GM12878 (cell line): ENCODE measurements at regions of chr11 and their contacts with region 1.

Region 1: DNA sequence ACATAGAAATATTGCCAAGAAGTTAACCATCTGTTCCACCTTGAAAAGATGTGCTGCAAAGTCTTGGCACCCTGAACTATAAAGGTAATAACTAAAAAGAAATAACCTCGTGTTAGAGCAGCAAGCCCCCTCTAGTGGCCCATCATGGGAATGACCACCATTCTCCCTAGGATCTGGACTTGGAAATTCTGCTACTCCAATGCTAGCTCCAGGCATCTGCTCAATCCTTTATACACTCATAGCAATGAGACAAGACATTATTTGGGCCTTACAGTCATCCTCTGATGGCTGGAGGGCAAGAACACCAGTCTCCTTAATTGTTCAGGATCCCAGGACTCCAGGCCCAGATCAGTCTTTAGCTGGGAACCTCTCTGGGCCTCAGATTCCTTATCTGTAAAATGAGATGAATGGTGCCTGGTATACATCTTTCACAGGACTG is 76.0 kb downstream of the CWC15 start:
- DNase-seq: no peak
- ATAC-seq: peak; percentile 71
- H3K4me3 ChIP-seq: no peak overlapping the region
- H3K27ac ChIP-seq: no peak overlapping the region
- H3K4me1 ChIP-seq: no peaks in the 10 kb centered on the region
- H3K27me3 ChIP-seq: peaks cover 0 to 3% of the 10 kb centered on the region in 2 experiments; a peak in 1 of 4 replicates
- CTCF ChIP-seq: peak; percentile 81 to 89 (median 88)
- EP300 ChIP-seq: no peak
- POLR2A ChIP-seq: no peak
- RAD21 ChIP-seq: peak; percentile 76

Region 2: GRCh38 chr11:94786264-94787126 is 110.9 kb before region 1 on chr11:
- CTCF ChIA-PET with region 1: interaction called, 25 read pairs
- POLR2A ChIA-PET with region 1: interaction called, 3 read pairs
- RAD21 ChIA-PET with region 1: interaction called, 7 read pairs
- SMC1A ChIA-PET with region 1: interaction called, 9 read pairs
- in situ Hi-C with region 1: no loop called
- intact Hi-C with region 1: loop called (anchors 5 kb)
- DNase-seq: no peak
- ATAC-seq: peak; percentile 63
- H3K4me3 ChIP-seq: no peak overlapping the region
- H3K27ac ChIP-seq: no peak overlapping the region
- H3K4me1 ChIP-seq: no peaks in the 10 kb centered on the region
- H3K27me3 ChIP-seq: no peaks in the 10 kb centered on the region
- CTCF ChIP-seq: peak; percentile 46 to 53 (median 47); a peak in 5 of 6 replicates
- EP300 ChIP-seq: no peak
- POLR2A ChIP-seq: no peak
- RAD21 ChIP-seq: peak; percentile 45

Region 3: DNA sequence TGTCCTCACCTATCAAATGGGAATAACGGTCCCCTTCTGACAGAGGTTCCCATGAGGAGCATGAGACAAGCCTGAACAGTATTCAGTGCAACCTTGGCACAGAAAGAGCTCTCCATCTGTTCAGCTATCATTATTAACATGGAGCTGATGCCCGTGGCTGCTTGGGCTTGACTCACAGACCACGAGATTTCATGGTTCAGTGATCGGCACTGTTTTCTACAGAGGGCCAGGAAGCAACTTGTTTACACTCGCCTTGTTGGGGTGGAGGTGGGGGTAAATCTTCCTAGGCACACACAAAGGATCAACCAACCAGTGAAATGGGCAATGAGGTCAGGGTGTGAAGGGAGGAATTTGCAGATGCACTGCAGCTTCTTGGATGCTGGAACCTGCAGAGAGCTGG is 12.2 kb before region 1 on chr11:
- CTCF ChIA-PET with region 1: interaction called, 7 read pairs
- POLR2A ChIA-PET with region 1: no interaction called
- RAD21 ChIA-PET with region 1: interaction called, 3 read pairs
- SMC1A ChIA-PET with region 1: interaction called, 10 read pairs
- in situ Hi-C with region 1: no loop called
- intact Hi-C with region 1: no loop called
- DNase-seq: peak; percentile 31
- ATAC-seq: peak; percentile 77
- H3K4me3 ChIP-seq: no peak overlapping the region
- H3K27ac ChIP-seq: no peak overlapping the region
- H3K4me1 ChIP-seq: no peaks in the 10 kb centered on the region
- H3K27me3 ChIP-seq: no peaks in the 10 kb centered on the region; a peak in 1 of 4 replicates
- CTCF ChIP-seq: no peak
- EP300 ChIP-seq: no peak
- POLR2A ChIP-seq: no peak
- RAD21 ChIP-seq: no peak